CD8-positive, alpha-beta memory T cell (primary cell): ENCODE measurements at regions of chr2 and their contacts with region 1.

Region 1: GRCh38 chr2:110812726-110813645 is 80.6 kb downstream of the ACOXL start:
- DNase-seq: no peak
- H3K4me3 ChIP-seq: no peak overlapping the region
- H3K4me3 Mint-ChIP-seq: no peak overlapping the region
- H3K27ac ChIP-seq: no peak overlapping the region
- H3K27ac Mint-ChIP-seq: no peak overlapping the region
- H3K4me1 ChIP-seq: peaks cover 4% of the 10 kb centered on the region
- H3K4me1 Mint-ChIP-seq: peaks cover 3 to 5% (median 5%) of the 10 kb centered on the region in 3 donors
- H3K27me3 ChIP-seq: no peaks in the 10 kb centered on the region
- H3K27me3 Mint-ChIP-seq: peaks cover 0 to 3% of the 10 kb centered on the region in 2 donors

Region 2: GRCh38 chr2:110828330-110828729 is 15.3 kb after region 1 on chr2:
- CTCF ChIA-PET with region 1: interaction called, 10 read pairs
- POLR2A ChIA-PET with region 1: no interaction called
- DNase-seq: no peak
- H3K4me3 ChIP-seq: no peak overlapping the region
- H3K4me3 Mint-ChIP-seq: no peak overlapping the region
- H3K27ac ChIP-seq: no peak overlapping the region
- H3K27ac Mint-ChIP-seq: no peak overlapping the region
- H3K4me1 ChIP-seq: peaks cover 14% of the 10 kb centered on the region
- H3K4me1 Mint-ChIP-seq: peaks cover 16 to 25% (median 21%) of the 10 kb centered on the region in 3 donors
- H3K27me3 ChIP-seq: no peaks in the 10 kb centered on the region
- H3K27me3 Mint-ChIP-seq: peaks cover 5 to 12% of the 10 kb centered on the region in 2 donors

Region 3: GRCh38 chr2:110853507-110853906 is 40.5 kb after region 1 on chr2:
- CTCF ChIA-PET with region 1: interaction called, 17 read pairs
- POLR2A ChIA-PET with region 1: interaction called, 5 read pairs
- DNase-seq: peak; percentile 34 to 69 (median 47)
- H3K4me3 ChIP-seq: no peak overlapping the region
- H3K4me3 Mint-ChIP-seq: peak overlapping the region; percentile 15 to 83 (median 67)
- H3K27ac ChIP-seq: no peak overlapping the region
- H3K27ac Mint-ChIP-seq: peak overlapping the region; percentile 89 to 98 (median 94)
- H3K4me1 ChIP-seq: peaks cover 37% of the 10 kb centered on the region
- H3K4me1 Mint-ChIP-seq: peaks cover 59 to 76% (median 60%) of the 10 kb centered on the region in 3 donors
- H3K27me3 ChIP-seq: no peaks in the 10 kb centered on the region
- H3K27me3 Mint-ChIP-seq: peaks cover 0 to 5% of the 10 kb centered on the region in 2 donors

Region 4: DNA sequence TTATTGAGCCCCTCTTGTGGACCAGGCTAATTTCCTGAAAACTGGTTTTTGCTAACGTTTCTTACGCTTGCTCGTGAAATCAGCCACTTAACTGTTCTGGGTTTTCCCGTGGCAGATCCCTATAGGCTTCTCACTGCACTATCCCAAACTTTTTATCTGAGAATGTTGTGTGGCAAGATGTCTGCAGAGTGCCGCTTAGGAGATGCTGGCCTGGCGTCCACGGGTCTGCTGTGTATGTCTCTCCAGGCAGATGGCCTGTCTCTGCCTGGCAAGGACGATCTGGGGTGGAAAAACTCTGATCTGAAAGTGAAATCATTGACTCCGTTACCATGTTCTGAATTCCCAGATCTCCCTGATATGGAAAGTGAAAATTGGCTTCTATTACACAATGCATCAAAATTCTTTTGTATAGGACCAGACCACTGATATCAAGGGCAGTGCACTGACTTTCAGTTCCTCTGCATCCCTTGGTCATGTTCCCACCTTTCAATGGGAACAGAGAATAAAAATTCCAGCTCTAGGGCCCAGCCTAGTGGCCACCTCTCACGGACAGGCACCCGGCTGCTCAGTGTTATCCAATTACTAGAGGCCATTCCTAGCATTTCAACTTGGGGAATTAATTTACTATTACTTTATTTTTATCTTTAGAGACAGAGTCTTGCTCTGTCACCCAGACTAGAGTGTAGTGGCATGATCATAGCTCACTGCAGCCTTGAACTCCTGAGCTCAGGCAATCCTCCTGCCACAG is 74.0 kb after region 1 on chr2:
- CTCF ChIA-PET with region 1: no interaction called
- POLR2A ChIA-PET with region 1: no interaction called
- DNase-seq: no peak
- H3K4me3 ChIP-seq: no peak overlapping the region
- H3K4me3 Mint-ChIP-seq: no peak overlapping the region
- H3K27ac ChIP-seq: no peak overlapping the region
- H3K27ac Mint-ChIP-seq: no peak overlapping the region
- H3K4me1 ChIP-seq: no peaks in the 10 kb centered on the region
- H3K4me1 Mint-ChIP-seq: no peaks in the 10 kb centered on the region
- H3K27me3 ChIP-seq: no peaks in the 10 kb centered on the region
- H3K27me3 Mint-ChIP-seq: peaks cover 16 to 24% of the 10 kb centered on the region in 2 donors

Region 5: DNA sequence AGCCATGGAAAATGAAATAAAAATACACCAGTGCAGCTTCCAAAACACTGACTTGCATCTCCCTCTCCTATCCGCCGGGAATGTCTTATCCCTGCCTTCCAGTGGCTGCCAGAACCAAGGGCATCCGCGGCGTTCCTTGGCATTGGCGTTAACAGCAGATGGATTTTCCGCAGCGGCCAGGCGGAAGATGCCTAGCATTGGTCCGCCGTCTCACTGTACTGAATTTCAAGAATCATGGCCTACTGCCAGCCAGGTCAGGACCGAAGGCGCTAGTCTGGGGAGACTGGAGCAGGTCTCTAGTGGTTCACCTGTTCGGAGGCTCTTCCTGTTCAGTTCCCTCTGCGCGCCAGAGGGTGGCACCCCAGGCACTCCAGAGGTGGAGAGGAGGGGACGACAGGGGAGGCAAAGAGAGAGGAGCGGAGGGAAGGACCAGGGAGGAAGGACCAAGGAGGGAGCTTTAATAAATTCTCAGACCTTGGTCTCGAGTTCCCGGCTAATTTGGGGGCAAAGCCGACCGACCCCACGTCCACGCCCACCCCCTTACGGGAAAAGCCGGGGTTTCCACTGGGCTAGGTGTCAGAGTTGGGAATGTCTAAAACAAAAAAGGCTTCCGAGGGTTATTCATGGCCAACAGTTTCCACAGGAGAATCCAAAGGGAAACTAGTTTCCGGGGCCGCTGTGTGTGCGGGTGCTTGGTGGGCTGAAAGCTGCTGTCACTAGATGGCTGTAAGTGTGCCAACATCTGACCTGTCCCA is 304.0 kb after region 1 on chr2:
- CTCF ChIA-PET with region 1: interaction called, 12 read pairs
- POLR2A ChIA-PET with region 1: no interaction called
- DNase-seq: peak; percentile 32 to 78 (median 55)
- H3K4me3 ChIP-seq: peak overlapping the region; percentile 65
- H3K4me3 Mint-ChIP-seq: peak overlapping the region; percentile 79 to 96 (median 87)
- H3K27ac ChIP-seq: no peak overlapping the region
- H3K27ac Mint-ChIP-seq: peak overlapping the region in 5 of 8 donors; percentile 3 to 76 (median 28)
- H3K4me1 ChIP-seq: peaks cover 33% of the 10 kb centered on the region
- H3K4me1 Mint-ChIP-seq: peaks cover 31 to 42% (median 37%) of the 10 kb centered on the region in 3 donors
- H3K27me3 ChIP-seq: peaks cover 31% of the 10 kb centered on the region
- H3K27me3 Mint-ChIP-seq: peaks cover 33 to 65% of the 10 kb centered on the region in 2 donors